ENCODE measurements at regions of chr6 and their contacts with region 1.

Region 1: DNA sequence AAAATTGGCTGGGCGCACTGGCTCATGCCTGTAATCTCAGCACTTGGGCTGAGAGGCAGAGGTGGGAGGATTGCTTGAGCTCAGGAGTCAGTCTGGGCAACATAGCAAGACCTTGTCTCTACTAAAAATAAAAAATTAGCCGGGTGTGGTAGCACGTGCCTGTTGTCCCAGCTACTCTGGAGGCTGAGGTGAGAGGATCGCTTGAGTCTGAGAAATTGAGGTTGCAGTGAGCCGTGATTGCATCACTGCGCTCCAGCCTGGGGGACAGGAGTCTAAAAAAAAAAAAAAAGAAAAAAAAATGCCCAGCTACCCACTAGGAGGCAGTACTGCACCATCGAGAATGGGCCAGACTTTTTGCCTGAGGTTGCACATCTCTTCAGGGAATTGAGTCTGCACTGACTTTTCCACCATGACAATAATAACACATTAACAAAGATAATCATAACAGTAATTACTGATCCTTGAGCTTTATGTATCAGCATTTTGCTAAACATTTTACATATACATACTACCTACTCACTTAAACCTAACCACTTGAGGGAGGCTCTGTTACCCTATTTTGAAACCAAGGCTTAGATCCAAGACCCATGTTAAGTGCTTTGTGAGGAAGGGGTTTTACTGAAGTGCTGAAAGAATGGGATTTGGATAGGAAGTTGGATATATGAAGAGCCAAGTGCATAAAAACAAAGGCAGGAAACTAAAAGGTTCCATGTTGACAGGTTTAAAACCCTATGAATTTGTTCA is 21.0 kb downstream of the SRSF3 start:
- DNase-seq: peak; percentile 66 to 76
- ATAC-seq: peak; percentile 23 to 66 (median 52)
- H3K4me3 ChIP-seq: no peak overlapping the region
- H3K27ac ChIP-seq: peak overlapping the region; percentile 81
- H3K4me1 ChIP-seq: peaks cover 28% of the 10 kb centered on the region
- H3K27me3 ChIP-seq: no peaks in the 10 kb centered on the region
- CTCF ChIP-seq: peak; percentile 62

Region 2: GRCh38 chr6:36692220-36692619 is 77.0 kb after region 1 on chr6:
- intact Hi-C with region 1: no loop called
- DNase-seq: peak in 1 of 2 donors; percentile 53
- ATAC-seq: no peak
- H3K4me3 ChIP-seq: no peak overlapping the region
- H3K27ac ChIP-seq: no peak overlapping the region
- H3K4me1 ChIP-seq: peaks cover 14% of the 10 kb centered on the region
- H3K27me3 ChIP-seq: no peaks in the 10 kb centered on the region
- CTCF ChIP-seq: no peak

Region 3: GRCh38 chr6:36759148-36759759 is 144.1 kb after region 1 on chr6:
- intact Hi-C with region 1: loop called (anchors 2 to 5 kb)
- DNase-seq: peak; percentile 79 to 91
- ATAC-seq: peak; percentile 88 to 98 (median 95)
- H3K4me3 ChIP-seq: no peak overlapping the region
- H3K27ac ChIP-seq: no peak overlapping the region
- H3K4me1 ChIP-seq: peaks cover 5% of the 10 kb centered on the region
- H3K27me3 ChIP-seq: no peaks in the 10 kb centered on the region
- CTCF ChIP-seq: peak; percentile 95

Region 4: GRCh38 chr6:36839749-36840431 is 224.7 kb after region 1 on chr6:
- intact Hi-C with region 1: loop called in 1 of 2 experiments (anchors 10 kb)
- DNase-seq: peak; percentile 56 to 70
- ATAC-seq: peak; percentile 23 to 54 (median 43)
- H3K4me3 ChIP-seq: peak overlapping the region; percentile 67
- H3K27ac ChIP-seq: peak overlapping the region; percentile 81
- H3K4me1 ChIP-seq: peaks cover 48% of the 10 kb centered on the region
- H3K27me3 ChIP-seq: peaks cover 0 to 4% (median 0%) of the 10 kb centered on the region in 3 donors
- CTCF ChIP-seq: peak; percentile 26

Region 5: DNA sequence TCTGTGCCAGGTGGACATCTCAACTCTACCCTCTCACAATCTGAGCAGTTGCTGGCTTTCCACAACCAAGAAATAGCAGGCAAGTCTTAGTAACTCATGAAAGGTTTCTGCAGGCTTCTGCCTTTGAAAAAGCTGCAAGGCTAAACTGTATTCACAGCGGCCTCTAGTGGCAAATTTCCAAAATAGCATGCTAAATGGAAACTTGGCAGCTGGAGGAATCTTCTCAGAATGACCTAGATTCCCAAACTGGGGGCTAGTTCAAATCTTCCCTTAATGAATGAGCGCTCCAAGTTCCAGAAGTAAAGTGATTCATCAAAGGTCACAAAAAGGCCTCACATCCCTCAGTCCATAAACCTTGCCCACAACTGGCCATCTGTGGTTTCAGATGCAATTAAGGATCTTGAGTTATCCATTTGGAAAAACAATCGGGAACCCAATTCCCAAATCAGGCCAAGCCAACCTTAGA is 236.0 kb after region 1 on chr6:
- intact Hi-C with region 1: loop called (anchors 5 to 10 kb)
- DNase-seq: no peak
- ATAC-seq: peak; percentile 5 to 59 (median 47)
- H3K4me3 ChIP-seq: no peak overlapping the region
- H3K27ac ChIP-seq: peak overlapping the region; percentile 94
- H3K4me1 ChIP-seq: peaks cover 36% of the 10 kb centered on the region
- H3K27me3 ChIP-seq: no peaks in the 10 kb centered on the region
- CTCF ChIP-seq: peak; percentile 77